ENCODE measurements at regions of chr1 and their contacts with region 1.

Region 1: DNA sequence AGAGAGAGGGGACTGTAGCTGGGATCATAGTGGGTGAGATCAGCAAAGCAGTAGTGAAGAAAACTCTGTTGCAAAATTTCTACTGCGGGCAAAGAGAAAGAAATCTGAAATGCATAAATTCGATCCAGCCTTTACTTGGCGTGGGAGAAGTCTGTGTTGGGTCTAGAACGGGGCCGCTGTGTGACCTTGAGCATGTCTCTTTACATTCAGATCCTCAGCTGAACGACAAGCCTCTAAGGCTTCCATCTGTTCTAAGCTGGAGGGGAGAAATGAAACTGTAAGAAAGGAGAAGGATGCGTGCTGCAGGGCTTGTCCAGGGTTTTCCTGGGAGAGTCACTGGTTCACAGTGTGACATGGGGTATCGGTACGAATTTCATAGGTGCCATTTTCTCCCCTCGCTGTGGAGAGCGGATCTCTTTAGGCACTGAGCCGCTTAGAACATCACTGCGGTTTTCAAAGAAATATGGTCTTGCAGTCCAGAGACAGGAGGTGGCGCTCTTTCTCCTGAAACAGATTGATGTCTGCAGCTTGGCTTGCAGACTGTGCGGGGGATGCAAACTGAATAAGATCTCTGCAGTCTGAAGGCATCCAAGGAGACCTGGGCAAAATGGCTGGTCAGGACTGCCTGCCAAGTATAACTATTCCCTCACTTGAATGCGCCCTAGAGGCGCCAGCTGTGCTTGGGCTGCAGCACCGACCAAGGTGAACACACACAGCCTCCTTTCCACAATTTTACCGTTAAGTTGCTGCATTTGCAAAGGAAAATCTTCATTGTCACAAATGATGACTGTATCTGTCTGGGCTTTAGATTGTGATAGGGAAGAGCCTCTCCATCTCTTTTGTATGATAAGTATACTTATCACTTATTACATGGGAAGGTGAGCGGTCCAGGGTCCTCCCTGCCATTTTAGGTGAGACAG is 104.1 kb downstream of the XCL2 start:
- DNase-seq: peak; percentile 53
- H3K4me3 ChIP-seq: no peak overlapping the region
- H3K27ac ChIP-seq: no peak overlapping the region
- H3K4me1 ChIP-seq: no peaks in the 10 kb centered on the region
- H3K27me3 ChIP-seq: no peaks in the 10 kb centered on the region
- CTCF ChIP-seq: peak in 3 of 4 experiments; percentile 41 to 70 (median 64)
- POLR2A ChIP-seq: no peak

Region 2: DNA sequence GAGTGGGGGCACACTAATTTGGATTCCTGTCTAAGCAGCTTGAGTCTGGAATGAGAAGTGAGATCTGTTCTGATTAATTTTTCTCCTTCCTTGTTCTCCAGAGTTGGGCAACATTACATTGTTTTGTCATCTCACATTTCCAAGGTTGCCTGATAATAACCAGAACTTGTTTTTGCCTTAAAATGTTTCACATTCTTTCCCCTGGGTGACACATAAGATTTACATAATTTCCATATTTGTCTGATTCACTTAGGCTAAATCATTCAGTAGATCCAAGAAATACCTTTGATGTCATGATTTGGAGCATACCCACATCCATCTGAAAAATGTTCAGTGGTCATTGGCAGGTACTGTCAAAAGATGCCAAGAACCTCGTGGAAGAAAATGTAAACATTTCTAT is 43.8 kb after region 1 on chr1:
- intact Hi-C with region 1: loop called (anchors 5 kb)
- DNase-seq: no peak
- H3K4me3 ChIP-seq: no peak overlapping the region
- H3K27ac ChIP-seq: no peak overlapping the region
- H3K4me1 ChIP-seq: no peaks in the 10 kb centered on the region
- H3K27me3 ChIP-seq: no peaks in the 10 kb centered on the region
- CTCF ChIP-seq: no peak
- POLR2A ChIP-seq: no peak

Region 3: DNA sequence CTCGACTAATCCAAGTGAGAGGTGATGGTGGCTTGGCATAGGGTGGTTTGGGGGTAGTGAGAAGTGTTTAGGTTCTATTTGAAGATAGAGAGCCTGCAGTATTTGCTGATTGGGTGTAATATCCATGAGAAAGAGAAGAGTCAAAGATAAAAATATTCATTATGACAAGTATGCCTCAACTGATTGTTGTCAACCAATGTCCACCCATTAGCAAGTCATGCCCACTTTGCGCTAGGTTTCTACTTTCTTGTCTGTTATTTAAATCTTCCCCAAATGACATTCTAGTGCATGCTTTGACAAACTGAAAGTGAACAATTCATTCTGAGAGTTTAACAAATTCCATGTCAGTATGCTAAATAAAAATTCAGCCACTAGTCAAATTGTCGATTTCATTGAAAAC is 132.9 kb after region 1 on chr1:
- intact Hi-C with region 1: loop called (anchors 10 kb)
- DNase-seq: no peak
- H3K4me3 ChIP-seq: no peak overlapping the region
- H3K27ac ChIP-seq: no peak overlapping the region
- H3K4me1 ChIP-seq: no peaks in the 10 kb centered on the region
- H3K27me3 ChIP-seq: no peaks in the 10 kb centered on the region
- CTCF ChIP-seq: no peak
- POLR2A ChIP-seq: no peak

Region 4: DNA sequence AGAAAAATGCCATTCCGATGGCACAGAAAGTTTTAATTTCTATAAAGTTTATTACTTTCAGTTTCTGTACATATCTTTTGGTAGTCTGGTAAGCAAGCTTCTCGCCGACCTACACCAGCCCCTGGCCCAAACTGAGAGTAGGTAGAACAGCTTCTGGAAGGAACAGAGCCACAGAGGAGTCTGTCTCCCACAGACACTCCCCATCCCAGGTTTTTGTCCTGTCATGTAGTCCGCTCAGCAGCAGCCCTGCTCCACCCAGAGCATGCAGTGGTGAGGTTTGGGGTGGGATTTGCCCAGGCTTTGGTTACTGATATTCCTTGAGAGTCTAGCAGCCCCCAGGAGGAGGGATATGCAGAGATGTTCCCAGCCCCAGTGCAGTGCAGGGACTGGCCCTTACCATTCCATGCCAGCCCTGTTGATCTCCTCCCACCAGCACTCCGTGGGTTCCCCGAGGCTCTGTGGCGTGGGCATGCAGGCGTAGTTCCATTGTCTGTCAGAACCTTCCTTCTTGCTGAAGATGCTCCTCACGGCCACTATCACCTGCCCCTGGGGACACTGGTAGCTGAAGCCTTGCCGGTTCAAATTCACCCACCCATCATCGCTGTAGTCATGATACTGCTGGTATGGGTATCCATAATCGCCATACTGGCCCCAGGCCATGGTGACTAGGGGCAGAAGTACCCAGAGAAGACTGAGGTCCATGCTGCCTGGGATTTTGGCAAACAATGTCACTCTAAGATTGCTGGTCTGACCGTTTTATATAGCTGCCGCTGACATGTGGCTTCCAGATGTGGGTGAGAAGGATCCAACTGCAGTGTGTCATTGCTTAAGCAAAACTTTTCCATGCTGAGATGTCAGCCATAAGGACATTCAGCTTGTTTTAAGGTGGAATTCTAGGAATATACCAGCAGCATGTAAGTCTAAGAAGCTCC is 289.0 kb after region 1 on chr1 and contains the start of gene DPT:
- intact Hi-C with region 1: no loop called
- DNase-seq: no peak
- H3K4me3 ChIP-seq: no peak within 1 kb of the TSS
- H3K27ac ChIP-seq: no peak within 1 kb of the TSS
- H3K4me1 ChIP-seq: no peaks in the 10 kb centered on the region
- H3K27me3 ChIP-seq: no peaks in the 10 kb centered on the region
- CTCF ChIP-seq: no peak
- POLR2A ChIP-seq: no peak
- total RNA-seq, gene DPT: 4.7 to 15.4 TPM

Region 5: GRCh38 chr1:169348383-169349036 is 908.8 kb after region 1 on chr1:
- intact Hi-C with region 1: loop called (anchors 10 kb)
- DNase-seq: peak; percentile 12
- H3K4me3 ChIP-seq: no peak overlapping the region
- H3K27ac ChIP-seq: no peak overlapping the region
- H3K4me1 ChIP-seq: no peaks in the 10 kb centered on the region
- H3K27me3 ChIP-seq: no peaks in the 10 kb centered on the region
- CTCF ChIP-seq: peak; percentile 74 to 88 (median 84)
- POLR2A ChIP-seq: no peak